ENCODE measurements at regions of chr2 and their contacts with region 1.

Region 1: GRCh38 chr2:113080134-113080533 is 12.4 kb downstream of the IL1F10 start:
- DNase-seq: peak; percentile 68
- ATAC-seq: peak; percentile 74
- H3K4me3 Mint-ChIP-seq: no peak overlapping the region
- H3K27ac Mint-ChIP-seq: no peak overlapping the region
- H3K4me1 Mint-ChIP-seq: peaks cover 13% of the 10 kb centered on the region
- H3K27me3 Mint-ChIP-seq: peaks cover 5% of the 10 kb centered on the region

Region 2: DNA sequence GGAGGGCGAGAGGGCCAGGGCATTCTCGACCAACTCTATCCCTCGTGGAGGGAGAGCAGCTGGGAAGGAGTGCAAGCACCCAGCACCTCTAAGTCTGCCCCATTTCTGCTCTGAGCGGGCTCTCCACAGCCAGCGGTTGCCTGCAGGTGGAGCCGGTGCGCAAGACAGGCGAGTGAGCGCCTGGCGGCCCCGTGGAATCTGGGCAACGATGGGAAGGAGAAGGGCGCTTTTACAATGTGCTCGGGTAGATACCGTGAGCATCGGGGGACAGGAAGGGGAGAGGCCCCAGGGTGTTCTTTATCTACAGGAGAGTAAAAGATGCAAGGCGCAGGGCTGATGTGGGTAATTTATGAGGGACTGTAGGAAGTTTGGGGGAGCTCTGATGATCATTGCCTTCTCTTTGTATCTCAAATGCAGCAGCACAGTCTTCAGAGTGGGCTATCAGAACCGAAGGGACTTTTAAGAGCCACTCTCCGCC is 599.0 kb before region 1 on chr2:
- CTCF ChIA-PET with region 1: no interaction called
- DNase-seq: peak; percentile 91
- ATAC-seq: peak; percentile 83
- H3K4me3 Mint-ChIP-seq: peak overlapping the region; percentile 86
- H3K27ac Mint-ChIP-seq: peak overlapping the region; percentile 88
- H3K4me1 Mint-ChIP-seq: peaks cover 23% of the 10 kb centered on the region
- H3K27me3 Mint-ChIP-seq: peaks cover 6% of the 10 kb centered on the region

Region 3: GRCh38 chr2:113124181-113124961 is 44.2 kb after region 1 on chr2:
- CTCF ChIA-PET with region 1: interaction called, 13 read pairs
- DNase-seq: peak; percentile 58
- ATAC-seq: peak; percentile 58
- H3K4me3 Mint-ChIP-seq: peak overlapping the region; percentile 26
- H3K27ac Mint-ChIP-seq: peak overlapping the region; percentile 68
- H3K4me1 Mint-ChIP-seq: peaks cover 41% of the 10 kb centered on the region
- H3K27me3 Mint-ChIP-seq: no peaks in the 10 kb centered on the region

Region 4: DNA sequence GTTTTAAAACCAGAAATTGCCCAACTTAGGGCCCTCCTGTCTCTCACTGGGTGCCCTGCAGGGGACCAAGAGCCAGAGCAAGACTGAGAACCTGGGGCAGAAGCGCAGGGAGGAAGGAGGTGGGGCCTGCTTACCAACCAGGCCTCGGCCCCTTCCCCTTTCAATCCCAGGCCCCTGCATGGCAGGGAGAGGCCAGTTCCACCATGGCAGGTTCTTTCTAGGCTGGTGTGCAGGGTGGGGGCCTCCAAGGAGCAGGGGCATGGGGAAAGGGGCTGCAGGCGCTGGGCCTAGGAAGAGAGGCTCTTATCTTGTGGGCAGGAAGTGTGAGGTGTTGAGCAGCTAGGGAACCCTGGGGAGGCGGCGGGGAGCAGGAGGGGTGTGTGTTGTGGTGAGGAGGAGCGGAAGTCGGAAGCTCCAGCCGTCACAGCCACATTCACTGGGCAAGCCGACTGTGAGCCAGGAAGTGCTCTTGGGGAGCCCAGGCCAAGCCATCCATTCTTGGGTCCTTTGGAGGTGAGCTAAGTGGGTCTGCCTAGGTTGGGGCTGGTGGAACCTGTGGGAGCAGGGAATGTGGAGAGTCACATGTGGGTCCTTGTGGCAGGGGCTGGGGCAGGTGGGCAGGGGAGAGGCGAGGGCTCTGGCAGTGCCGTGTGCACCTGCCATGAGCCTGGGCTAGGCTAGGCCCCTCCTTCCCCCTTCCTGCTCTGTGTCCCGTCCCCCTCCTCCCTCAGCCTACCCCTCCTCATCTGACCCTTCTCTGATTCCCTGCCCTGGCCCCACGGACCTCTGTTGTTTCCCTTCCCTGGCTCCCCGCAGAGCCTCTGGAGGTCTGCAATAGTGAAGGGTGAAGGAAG is 93.6 kb after region 1 on chr2 and contains the start of gene PSD4:
- CTCF ChIA-PET with region 1: interaction called, 15 read pairs
- DNase-seq: peak; percentile 97
- ATAC-seq: peak; percentile 73
- H3K4me3 Mint-ChIP-seq: peak within 1 kb of the TSS; percentile 89
- H3K27ac Mint-ChIP-seq: peak within 1 kb of the TSS; percentile 93
- H3K4me1 Mint-ChIP-seq: peaks cover 69% of the 10 kb centered on the region
- H3K27me3 Mint-ChIP-seq: peaks cover 3% of the 10 kb centered on the region
- total RNA-seq, gene PSD4: 314 to 388 TPM

Region 5: DNA sequence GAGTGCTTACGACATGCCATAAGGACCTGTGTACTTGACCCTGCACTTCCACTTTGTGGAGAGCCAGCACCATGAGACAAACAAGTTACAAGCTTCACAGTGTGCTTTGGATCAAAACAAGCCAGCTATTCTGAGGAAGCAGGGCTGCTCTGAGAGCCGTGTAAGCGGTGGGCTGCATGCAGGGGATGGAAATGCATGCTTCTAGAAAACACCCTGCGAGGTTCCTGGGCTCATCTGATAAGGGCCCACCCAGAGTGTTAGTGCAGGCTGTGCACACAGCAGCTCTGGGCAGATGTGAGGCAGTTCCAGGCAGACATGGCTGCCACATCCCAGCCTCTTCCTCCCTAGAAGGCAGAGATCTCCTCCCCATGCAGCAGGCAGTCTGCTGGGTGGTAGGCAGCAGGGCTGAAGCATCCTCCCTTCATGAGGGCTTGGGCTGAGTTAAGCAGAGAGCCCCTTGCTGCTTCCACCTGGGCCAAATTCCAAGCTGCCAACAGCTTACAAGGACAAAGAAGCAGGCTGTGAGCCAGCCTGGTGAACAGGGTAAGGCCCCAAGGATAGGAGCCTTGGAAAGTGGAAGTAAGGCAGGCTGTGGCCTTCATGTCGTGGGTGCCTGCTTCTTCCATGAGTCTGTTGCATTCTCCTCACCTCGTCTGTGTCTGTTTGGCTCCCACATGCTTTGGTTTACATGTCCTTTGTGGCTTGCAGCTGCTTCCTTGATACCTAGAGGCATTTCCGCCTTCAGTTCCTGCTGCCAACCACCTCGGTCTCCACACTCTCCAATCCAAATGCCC is 101.3 kb after region 1 on chr2:
- CTCF ChIA-PET with region 1: interaction called, 10 read pairs
- DNase-seq: no peak
- ATAC-seq: peak; percentile 25
- H3K4me3 Mint-ChIP-seq: peak overlapping the region; percentile 89
- H3K27ac Mint-ChIP-seq: peak overlapping the region; percentile 87
- H3K4me1 Mint-ChIP-seq: peaks cover 93% of the 10 kb centered on the region
- H3K27me3 Mint-ChIP-seq: no peaks in the 10 kb centered on the region

Region 6: DNA sequence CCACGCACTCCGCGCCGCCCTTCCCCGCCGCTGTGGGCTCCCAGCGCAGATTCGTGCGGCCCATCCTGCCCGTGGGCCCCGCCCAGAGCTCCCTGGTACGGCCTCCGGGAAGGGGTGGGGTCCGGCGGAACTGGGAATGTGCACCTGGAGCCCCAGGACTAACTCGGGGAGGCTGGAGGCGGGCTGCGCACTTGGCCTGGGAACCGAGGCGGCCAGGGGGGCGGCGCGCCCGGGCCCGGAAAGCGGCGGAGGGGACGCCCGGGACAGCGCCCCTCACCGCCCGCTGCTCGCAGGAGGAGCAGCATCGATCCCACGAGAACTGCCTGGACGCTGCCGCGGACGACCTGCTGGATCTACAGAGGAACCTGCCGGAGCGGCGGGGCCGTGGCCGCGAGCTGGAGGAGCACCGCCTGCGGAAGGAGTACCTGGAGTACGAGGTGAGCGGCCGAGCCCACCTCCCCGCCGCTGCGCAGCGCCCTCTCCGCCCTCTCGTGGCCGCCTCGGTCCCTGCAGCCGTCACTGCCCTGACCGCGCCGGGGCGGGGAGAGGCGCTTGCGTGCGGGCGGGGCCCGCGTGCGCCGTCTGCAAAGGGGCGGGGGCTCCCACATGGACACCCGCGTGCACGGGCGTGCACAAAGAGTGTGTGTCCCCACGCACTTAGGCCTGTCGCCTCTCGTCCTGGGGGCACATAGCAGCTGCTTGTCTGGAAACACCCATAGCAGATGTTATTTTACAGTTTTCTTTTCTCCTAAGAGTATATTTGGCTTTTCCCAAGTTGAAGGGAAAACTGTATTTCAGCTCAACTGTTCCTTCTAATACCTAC is 118.9 kb after region 1 on chr2:
- CTCF ChIA-PET with region 1: interaction called, 31 read pairs
- DNase-seq: peak; percentile 85
- ATAC-seq: peak; percentile 81
- H3K4me3 Mint-ChIP-seq: no peak overlapping the region
- H3K27ac Mint-ChIP-seq: peak overlapping the region; percentile 47
- H3K4me1 Mint-ChIP-seq: peaks cover 53% of the 10 kb centered on the region
- H3K27me3 Mint-ChIP-seq: no peaks in the 10 kb centered on the region

Region 7: GRCh38 chr2:113342650-113343049 is 262.5 kb after region 1 on chr2:
- CTCF ChIA-PET with region 1: no interaction called
- DNase-seq: no peak
- ATAC-seq: peak; percentile 61
- H3K4me3 Mint-ChIP-seq: no peak overlapping the region
- H3K27ac Mint-ChIP-seq: no peak overlapping the region
- H3K4me1 Mint-ChIP-seq: peaks cover 13% of the 10 kb centered on the region
- H3K27me3 Mint-ChIP-seq: peaks cover 25% of the 10 kb centered on the region

Region 8: DNA sequence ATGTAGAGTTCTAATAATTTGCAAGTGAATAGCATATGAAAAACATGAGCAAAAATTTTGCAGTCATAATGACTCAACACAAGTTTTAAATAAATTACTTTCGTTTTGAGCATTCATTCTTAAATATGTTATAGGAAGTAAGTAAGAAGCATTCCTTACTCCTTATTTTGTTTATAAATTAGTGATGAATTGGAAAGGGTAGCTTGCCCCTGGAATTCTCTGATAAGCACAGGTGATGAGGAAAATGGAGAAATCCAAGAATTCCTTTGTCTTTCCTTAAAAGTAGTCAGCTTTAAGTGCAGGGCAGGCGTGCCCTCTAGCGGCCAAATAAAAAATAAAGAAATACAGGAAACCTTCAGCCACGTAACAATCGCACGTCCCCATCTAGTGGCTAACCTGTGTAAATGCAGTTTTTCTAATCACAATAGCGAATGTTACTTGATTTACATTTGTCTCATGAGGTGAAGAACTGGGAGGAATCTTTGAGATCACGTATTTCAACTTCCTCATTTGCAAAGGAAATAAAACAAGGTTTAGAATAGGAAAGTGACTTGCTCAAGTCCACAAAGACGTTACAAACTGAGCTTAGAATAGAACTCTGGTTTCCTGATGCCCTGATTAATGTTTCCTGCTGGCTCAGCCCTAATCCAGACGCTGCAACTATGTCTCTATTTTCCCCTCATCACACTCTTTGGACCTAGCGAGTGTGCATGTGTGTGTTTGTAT is 310.2 kb after region 1 on chr2:
- CTCF ChIA-PET with region 1: interaction called, 14 read pairs
- DNase-seq: peak; percentile 74
- ATAC-seq: peak; percentile 92
- H3K4me3 Mint-ChIP-seq: peak overlapping the region; percentile 62
- H3K27ac Mint-ChIP-seq: peak overlapping the region; percentile 74
- H3K4me1 Mint-ChIP-seq: peaks cover 13% of the 10 kb centered on the region
- H3K27me3 Mint-ChIP-seq: peaks cover 26% of the 10 kb centered on the region

Measured in activated CD8-positive, alpha-beta memory T cell treated with anti-CD3 and anti-CD28 coated beads, Interleukin-2, amount 10 ng/mL, durations not matched to agents 7 days and 5 days (primary cell).